HepG2 (cell line): ENCODE measurements at regions of chr1 and their contacts with region 1.

Region 1: GRCh38 chr1:200669314-200670241 is at the start of gene DDX59:
- DNase-seq: peak; percentile 94
- ATAC-seq: peak; percentile 93
- H3K4me3 ChIP-seq: peak within 1 kb of the TSS; percentile 86 to 94 (median 87)
- H3K27ac ChIP-seq: peak within 1 kb of the TSS; percentile 98
- H3K4me1 ChIP-seq: peaks cover 18% of the 10 kb centered on the region
- H3K27me3 ChIP-seq: no peaks in the 10 kb centered on the region
- CTCF ChIP-seq: no peak
- EP300 ChIP-seq: peak in 1 of 2 experiments; percentile 24; a peak in 1 of 4 replicates
- POLR2A ChIP-seq: peak; percentile 46 to 85; a peak in 3 of 4 replicates
- RAD21 ChIP-seq: peak; percentile 21; the same call in 1 of the 2 replicates
- total RNA-seq, gene DDX59: 14.8 and 21.7 TPM in 2 replicates

Region 2: GRCh38 chr1:200738740-200739498 is 69.3 kb after region 1 on chr1 and contains the start of gene CAMSAP2:
- CTCF ChIA-PET with region 1: no interaction called
- POLR2A ChIA-PET with region 1: interaction called, 20 read pairs
- in situ Hi-C with region 1: no loop called
- intact Hi-C with region 1: loop called (anchors 2 kb)
- DNase-seq: peak; percentile 68
- ATAC-seq: peak; percentile 89
- H3K4me3 ChIP-seq: peak within 1 kb of the TSS; percentile 80 to 93 (median 85)
- H3K27ac ChIP-seq: peak within 1 kb of the TSS; percentile 90
- H3K4me1 ChIP-seq: peaks cover 41% of the 10 kb centered on the region
- H3K27me3 ChIP-seq: peaks cover 0 to 8% of the 10 kb centered on the region in 2 experiments; a peak in 2 of 5 replicates
- CTCF ChIP-seq: no peak
- EP300 ChIP-seq: no peak; a peak in 1 of 4 replicates
- POLR2A ChIP-seq: peak; percentile 44 to 67
- RAD21 ChIP-seq: peak; percentile 14; the same call in 1 of the 2 replicates
- total RNA-seq, gene CAMSAP2: 8.2 and 10.3 TPM in 2 replicates

Region 3: DNA sequence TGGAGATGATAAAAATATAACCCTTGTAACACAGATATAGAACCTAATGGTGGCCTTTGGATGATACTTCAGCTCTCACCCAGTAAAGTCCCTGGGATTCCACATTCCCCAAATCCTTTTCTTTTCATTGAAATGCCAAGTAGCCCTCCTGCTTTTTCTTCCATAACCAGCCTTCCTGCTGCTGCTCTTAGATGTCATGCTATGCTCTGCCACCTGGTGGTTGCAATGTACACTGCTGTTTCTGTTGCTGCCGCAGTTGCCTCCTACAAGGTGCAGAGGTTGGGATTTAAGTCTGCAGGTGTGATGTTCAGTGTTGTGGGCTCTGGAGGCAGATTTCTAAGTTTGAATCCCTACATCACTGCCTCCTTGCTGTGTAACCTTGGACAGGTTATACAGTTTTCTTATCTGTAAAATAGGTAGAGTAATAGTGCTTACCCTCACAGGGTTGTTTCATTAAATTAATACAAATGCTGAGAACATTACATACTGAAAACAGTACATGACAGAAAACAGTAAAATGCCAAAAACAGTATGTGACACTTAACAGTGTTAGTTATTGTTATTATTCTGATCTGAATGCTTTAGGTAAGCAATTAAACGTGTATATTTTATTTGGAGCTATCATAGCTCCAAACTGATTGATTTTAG is 133.4 kb after region 1 on chr1:
- CTCF ChIA-PET with region 1: no interaction called
- POLR2A ChIA-PET with region 1: no interaction called
- in situ Hi-C with region 1: no loop called
- intact Hi-C with region 1: loop called (anchors 2 kb)
- DNase-seq: peak; percentile 71
- ATAC-seq: peak; percentile 95
- H3K4me3 ChIP-seq: no peak overlapping the region
- H3K27ac ChIP-seq: no peak overlapping the region
- H3K4me1 ChIP-seq: no peaks in the 10 kb centered on the region
- H3K27me3 ChIP-seq: no peaks in the 10 kb centered on the region
- CTCF ChIP-seq: peak; percentile 91
- EP300 ChIP-seq: no peak
- POLR2A ChIP-seq: no peak
- RAD21 ChIP-seq: peak; percentile 75

Region 4: DNA sequence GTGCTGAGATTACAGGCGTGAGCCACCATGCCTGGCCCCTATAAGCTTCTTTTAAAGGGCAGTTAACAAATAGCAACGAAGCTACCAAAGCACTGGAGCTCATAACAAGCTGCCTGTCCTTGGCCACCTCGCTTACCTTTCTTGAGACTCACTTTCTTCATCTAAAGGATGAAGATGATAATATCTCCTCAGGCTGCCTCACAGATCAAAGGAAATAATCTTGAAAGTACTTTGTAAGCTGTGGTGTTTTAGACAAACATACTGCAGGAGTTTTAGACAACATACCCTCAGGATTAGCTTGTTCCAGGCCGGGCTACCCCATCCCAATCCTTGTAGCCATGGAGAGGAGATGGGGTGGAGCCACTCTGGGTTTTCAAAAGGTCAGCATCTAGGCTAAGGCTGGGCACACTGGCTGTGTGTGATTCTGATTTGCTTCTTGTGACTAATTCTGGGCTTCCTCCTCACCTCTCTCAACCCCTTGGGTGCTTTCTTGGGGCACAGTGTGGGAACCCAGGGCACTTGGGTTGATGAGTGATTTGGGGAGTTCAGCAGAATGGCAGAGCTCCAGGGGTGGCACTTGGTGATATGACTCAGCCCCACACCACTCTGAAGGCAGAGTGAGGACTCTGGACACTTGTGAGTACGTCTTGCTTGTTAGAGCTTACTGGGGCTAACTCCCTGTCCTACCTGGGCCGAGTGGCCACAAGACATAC is 208.4 kb after region 1 on chr1:
- CTCF ChIA-PET with region 1: no interaction called
- POLR2A ChIA-PET with region 1: no interaction called
- in situ Hi-C with region 1: no loop called
- intact Hi-C with region 1: no loop called
- DNase-seq: no peak
- ATAC-seq: no peak
- H3K4me3 ChIP-seq: no peak overlapping the region
- H3K27ac ChIP-seq: no peak overlapping the region
- H3K4me1 ChIP-seq: no peaks in the 10 kb centered on the region
- H3K27me3 ChIP-seq: 0 out of 5 replicates have a peak, but pooled peaks cover 0 to 4% of the 10 kb centered on the region in 2 experiments
- CTCF ChIP-seq: no peak
- EP300 ChIP-seq: no peak
- POLR2A ChIP-seq: no peak
- RAD21 ChIP-seq: no peak

Region 5: DNA sequence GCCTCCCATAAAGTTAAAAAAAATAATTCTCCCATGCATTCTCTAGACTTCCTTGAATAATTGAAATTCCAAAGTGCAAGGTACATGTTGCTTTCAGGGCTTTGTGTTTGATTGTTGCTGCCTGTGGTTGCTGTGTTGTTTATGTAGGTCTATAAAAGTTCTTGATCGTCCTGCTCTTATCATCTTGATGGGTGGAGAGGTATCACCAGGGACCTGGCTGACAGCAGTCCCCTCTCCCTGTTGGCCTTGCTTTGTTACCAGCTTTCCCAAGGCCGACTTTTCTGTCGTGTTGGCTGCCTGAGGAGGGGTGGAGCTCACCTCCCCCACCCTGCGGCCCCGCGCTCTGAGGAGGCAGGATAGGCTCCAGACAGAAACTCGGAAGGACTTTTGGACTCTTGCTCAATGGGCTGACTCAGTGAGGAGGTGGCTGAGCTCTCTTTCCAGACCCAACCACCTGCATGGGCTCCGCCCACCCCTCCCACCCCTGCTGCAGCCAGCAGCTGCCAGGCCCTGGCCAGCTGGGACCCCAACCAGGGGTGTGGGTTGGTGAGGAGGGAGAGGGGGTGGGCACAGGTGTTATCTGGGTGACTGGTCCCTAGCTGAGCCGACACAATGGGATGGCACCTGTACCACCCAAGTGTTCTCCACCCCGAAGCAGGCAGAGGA is 227.1 kb after region 1 on chr1:
- CTCF ChIA-PET with region 1: no interaction called
- POLR2A ChIA-PET with region 1: interaction called, 15 read pairs
- in situ Hi-C with region 1: no loop called
- intact Hi-C with region 1: no loop called
- DNase-seq: peak; percentile 93
- ATAC-seq: peak; percentile 46
- H3K4me3 ChIP-seq: peak overlapping the region; percentile 15 to 76 (median 61); a peak in 5 of 6 replicates
- H3K27ac ChIP-seq: peak overlapping the region; percentile 79
- H3K4me1 ChIP-seq: peaks cover 88% of the 10 kb centered on the region
- H3K27me3 ChIP-seq: no peaks in the 10 kb centered on the region
- CTCF ChIP-seq: no peak
- EP300 ChIP-seq: peak; percentile 57 to 85; a peak in 3 of 4 replicates
- POLR2A ChIP-seq: peak in 1 of 2 experiments; percentile 62; a peak in 2 of 4 replicates
- RAD21 ChIP-seq: no peak